Ascending aorta (tissue), 2 donors: ENCODE measurements at regions of chr10 and their contacts with region 1.

Region 1: DNA sequence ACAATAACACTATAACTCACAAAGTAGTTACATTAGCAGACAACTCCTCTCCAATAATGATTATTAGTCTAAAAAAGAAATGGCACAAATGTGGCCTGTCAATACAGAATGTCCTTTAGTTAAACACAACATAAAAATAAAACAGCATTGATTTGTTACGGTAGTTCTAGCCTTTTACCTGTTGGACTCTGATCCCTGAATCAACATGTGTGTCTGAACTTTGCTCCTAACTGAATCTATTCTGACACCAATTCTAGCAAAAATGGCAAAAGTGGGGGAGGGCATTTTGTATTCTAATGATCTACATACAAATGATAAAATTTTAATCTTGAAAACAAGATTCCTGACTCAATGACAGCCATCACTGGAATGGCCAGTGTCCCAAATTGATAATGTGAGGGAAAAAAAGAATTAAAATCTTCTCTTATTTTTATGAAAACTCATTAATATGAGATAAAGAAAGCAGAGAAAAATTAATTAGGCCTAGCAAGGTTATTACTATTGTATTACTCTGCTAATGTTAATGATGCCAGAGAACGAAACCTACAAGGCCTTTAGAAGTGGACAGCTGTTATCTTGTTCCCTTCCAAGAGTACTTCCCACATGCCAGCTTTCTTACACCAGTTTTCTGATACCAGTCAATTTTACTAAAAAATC is 30.2 kb downstream of the FRA10AC1 start:
- DNase-seq: no peak
- H3K4me3 ChIP-seq: no peak overlapping the region
- H3K27ac ChIP-seq: no peak overlapping the region
- H3K4me1 ChIP-seq: no peaks in the 10 kb centered on the region
- H3K27me3 ChIP-seq: no peaks in the 10 kb centered on the region
- CTCF ChIP-seq: no peak

Region 2: DNA sequence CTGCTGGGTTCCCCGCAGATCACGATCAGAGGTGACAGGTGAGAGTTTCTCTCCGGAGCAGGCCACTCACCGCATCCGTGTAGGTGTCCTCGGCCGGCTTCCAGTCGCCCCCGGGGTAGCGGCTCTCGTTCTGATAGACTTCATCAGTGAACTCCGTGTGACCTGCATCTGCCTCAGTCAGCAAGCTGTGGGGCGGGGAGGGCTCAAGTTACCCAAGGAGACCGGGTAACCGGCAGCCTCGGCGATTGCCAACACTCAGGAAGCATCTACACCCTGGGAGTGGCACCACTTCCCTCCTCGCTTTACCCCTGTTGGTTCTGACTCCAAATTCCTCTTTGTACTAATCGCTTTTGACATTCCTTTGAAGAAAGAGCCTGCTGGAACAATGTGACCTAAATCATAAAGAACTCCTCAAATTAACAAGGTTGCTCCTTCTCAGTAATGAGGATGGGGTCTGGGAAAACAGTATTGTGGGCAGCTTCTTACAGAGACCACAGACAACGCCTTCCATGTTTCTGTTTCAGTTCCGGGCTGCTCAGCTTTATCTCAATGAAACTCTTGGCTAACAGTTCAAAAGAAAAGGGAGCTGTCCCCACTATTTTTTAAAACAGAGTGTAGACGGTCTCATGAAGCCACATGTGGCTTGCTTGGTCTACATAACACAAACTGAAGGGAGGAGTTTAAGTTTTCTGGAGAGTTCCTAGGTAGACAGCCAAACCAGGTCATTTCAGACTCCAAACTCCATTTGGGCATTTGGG is 308.1 kb before region 1 on chr10:
- intact Hi-C with region 1: loop called (anchors 10 kb)
- DNase-seq: no peak
- H3K4me3 ChIP-seq: no peak overlapping the region
- H3K27ac ChIP-seq: peak overlapping the region in 1 of 2 donors; percentile 1
- H3K4me1 ChIP-seq: no peaks in the 10 kb centered on the region
- H3K27me3 ChIP-seq: no peaks in the 10 kb centered on the region
- CTCF ChIP-seq: no peak

Region 3: DNA sequence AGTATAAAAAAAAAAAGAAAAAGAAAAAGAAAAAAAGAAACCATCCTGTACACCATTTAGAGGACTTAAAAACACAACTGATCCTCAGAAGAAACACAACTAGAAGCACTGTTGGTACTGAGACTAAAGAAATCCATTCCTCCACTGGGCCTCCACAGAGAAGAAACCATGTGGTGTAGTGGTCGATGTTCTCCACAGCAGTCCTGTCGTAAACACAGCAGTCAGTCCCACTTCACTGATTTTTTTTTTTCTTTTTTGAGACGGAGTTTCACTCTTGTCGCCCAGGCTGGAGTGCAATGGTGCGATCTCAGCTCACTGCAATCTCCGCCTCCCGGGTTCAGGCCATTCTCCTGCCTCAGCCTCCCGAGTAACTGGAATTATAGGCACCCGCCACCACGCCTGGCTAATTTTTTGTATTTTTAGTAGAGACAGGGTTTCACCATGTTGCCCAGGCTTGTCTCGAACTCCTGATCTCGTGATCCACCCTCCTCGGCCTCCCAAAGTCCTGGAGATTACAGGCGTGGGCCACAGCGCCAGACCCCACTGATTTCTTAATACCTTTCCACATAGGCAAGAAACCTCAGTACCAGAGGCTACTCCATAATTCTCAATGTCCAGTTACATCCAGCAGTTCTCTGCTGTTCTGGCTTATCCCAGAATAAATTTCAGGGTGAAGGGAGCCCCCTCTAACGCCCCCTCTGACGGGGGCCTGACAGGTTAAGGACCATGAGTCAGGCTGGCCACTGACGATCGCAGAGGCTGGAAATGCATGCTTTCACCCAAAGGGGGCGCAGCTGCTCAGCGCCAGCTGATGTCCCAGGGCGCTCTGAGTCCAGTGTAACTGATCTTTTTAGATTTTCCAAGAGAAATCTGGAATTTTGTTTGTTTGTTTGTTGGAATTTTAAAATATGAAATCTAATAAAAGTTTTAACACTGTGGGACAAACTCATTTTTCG is 130.5 kb before region 1 on chr10:
- intact Hi-C with region 1: no loop called
- DNase-seq: no peak
- H3K4me3 ChIP-seq: peak overlapping the region in 1 of 2 donors; percentile 30
- H3K27ac ChIP-seq: no peak overlapping the region
- H3K4me1 ChIP-seq: no peaks in the 10 kb centered on the region
- H3K27me3 ChIP-seq: no peaks in the 10 kb centered on the region
- CTCF ChIP-seq: peak; percentile 56 to 80 (median 78)